CD8-positive, alpha-beta T cell (primary cell): ENCODE measurements at regions of chr6 and their contacts with region 1.

Region 1: DNA sequence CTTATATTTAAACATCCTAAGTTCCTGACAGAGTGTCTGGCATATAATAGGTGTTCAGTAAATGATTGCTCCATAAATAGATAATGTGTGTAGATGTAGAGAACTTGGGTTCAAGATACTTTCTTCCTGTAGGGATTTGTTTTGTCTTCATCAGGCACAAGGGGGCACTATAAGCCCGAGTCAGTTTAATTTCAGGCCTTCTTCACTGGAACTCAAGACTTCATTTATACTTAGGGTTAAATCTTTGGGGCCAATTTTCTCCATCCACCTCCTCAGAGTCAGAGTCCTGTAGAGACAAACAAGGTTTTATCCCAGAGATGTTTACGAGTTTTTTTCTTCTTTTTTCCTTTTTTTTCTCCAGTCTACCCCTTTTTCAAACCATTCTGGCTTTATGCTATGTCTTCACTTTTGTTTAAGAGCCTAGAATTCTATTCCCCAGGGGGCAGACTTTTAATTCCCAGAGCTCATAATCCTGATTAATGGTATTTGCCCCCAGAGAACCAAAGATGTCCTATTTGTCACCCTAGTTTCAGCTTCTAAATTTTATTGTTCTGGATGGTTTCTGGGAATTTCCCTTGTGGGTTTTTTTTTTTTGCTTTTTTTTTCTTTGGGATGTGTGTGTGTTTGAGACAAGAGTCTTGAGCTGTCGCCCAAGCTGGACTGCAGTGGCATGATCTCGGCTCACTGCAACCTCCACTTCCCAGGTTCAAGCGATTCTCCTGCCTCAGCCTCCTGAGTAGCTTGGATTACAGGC is 88.4 kb downstream of the HFE start:
- DNase-seq: peak in 7 of 9 experiments; percentile 33 to 87 (median 53)
- ATAC-seq: no peak
- H3K4me3 ChIP-seq: no peak overlapping the region
- H3K4me3 Mint-ChIP-seq: peak overlapping the region; percentile 3
- H3K27ac ChIP-seq: no peak overlapping the region
- H3K27ac Mint-ChIP-seq: peak overlapping the region; percentile 63
- H3K4me1 ChIP-seq: peaks cover 26% of the 10 kb centered on the region
- H3K4me1 Mint-ChIP-seq: peaks cover 39% of the 10 kb centered on the region
- H3K27me3 ChIP-seq: no peaks in the 10 kb centered on the region
- H3K27me3 Mint-ChIP-seq: no peaks in the 10 kb centered on the region
- CTCF ChIP-seq: peak; percentile 93

Region 2: GRCh38 chr6:26163427-26164119 is 12.0 kb before region 1 on chr6:
- CTCF ChIA-PET with region 1: interaction called, 15 read pairs
- POLR2A ChIA-PET with region 1: interaction called, 400 read pairs
- intact Hi-C with region 1: loop called (anchors 1 kb)
- DNase-seq: no peak
- ATAC-seq: no peak
- H3K4me3 ChIP-seq: no peak overlapping the region
- H3K4me3 Mint-ChIP-seq: peak overlapping the region; percentile 42
- H3K27ac ChIP-seq: no peak overlapping the region
- H3K27ac Mint-ChIP-seq: peak overlapping the region; percentile 70
- H3K4me1 ChIP-seq: peaks cover 40% of the 10 kb centered on the region
- H3K4me1 Mint-ChIP-seq: peaks cover 48% of the 10 kb centered on the region
- H3K27me3 ChIP-seq: no peaks in the 10 kb centered on the region
- H3K27me3 Mint-ChIP-seq: no peaks in the 10 kb centered on the region
- CTCF ChIP-seq: no peak

Region 3: DNA sequence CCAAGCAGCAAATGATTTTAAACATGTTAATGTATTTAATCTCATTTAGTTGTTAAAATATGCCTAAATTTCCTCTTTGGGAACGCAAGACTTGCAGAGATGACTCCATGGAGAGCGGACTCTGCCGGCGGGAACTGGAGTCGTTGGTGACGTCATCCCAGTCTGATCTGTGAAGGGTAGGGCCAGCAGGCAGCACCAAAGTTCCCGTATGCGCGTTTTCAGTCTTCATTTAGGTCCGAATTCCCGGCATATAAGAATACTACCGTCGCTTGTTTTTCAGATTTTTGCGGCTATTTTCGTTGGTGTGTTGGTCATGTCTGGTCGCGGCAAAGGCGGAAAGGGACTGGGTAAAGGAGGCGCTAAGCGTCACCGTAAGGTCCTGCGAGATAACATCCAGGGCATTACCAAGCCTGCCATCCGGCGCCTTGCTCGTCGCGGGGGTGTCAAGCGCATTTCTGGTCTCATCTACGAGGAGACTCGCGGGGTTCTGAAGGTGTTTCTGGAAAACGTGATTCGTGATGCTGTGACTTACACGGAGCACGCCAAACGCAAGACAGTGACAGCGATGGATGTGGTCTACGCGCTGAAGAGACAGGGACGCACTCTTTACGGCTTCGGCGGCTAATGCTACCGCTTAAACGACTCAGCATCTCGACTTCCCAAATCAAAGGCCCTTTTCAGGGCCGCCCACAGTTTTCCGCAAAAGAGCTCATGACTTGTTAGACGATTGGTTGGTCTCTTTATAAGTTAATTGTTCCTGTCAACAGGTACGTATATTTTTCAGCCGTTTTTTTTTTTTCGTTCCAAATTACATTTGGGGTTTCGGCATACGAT is 28.9 kb after region 1 on chr6:
- CTCF ChIA-PET with region 1: interaction called, 44 read pairs
- POLR2A ChIA-PET with region 1: interaction called, 250 read pairs
- intact Hi-C with region 1: no loop called
- DNase-seq: peak; percentile 75 to 98 (median 84)
- ATAC-seq: peak; percentile 74
- H3K4me3 ChIP-seq: peak overlapping the region; percentile 54 to 70
- H3K4me3 Mint-ChIP-seq: no peak overlapping the region
- H3K27ac ChIP-seq: peak overlapping the region; percentile 91
- H3K27ac Mint-ChIP-seq: no peak overlapping the region
- H3K4me1 ChIP-seq: peaks cover 31% of the 10 kb centered on the region
- H3K4me1 Mint-ChIP-seq: peaks cover 23% of the 10 kb centered on the region
- H3K27me3 ChIP-seq: no peaks in the 10 kb centered on the region
- H3K27me3 Mint-ChIP-seq: no peaks in the 10 kb centered on the region
- CTCF ChIP-seq: no peak

Region 4: DNA sequence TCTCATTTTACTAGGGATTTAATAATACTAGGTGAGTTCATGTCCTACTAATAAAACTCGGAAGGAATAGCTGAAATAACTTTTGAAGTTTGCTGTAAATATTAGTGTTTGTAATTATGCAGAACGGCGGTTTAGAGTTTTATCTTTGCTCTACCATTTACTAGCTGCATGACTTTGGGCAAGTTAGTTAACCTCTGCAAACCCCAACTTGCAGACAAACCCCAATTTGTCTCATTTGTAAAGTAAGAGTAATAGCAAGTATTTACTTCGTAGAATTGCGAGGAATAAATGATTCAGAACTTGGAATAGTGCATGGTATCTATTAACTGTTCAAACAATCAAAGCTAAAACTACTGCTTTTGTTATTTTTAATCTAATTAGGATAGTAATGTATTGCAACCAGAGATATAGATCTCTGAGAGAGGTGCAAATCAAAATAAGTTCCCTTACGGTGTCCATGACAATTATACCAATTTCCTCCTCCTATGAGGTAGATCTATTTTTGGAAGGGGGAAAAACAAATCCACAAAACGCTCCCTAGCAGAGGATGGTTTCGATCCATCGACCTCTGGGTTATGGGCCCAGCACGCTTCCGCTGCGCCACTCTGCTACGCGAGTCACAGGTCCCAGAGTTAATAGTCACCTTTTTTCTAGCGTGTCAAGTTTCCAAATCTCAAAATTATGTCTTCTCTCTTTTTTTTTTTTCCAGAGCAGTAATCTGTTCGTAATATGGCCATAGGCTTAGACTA is 154.3 kb after region 1 on chr6:
- CTCF ChIA-PET with region 1: interaction called, 3 read pairs
- POLR2A ChIA-PET with region 1: interaction called, 5 read pairs
- intact Hi-C with region 1: loop called in 1 of 2 experiments (anchors 5 kb)
- DNase-seq: peak in 7 of 9 experiments; percentile 35 to 81 (median 60)
- ATAC-seq: peak; percentile 27
- H3K4me3 ChIP-seq: no peak overlapping the region
- H3K4me3 Mint-ChIP-seq: peak overlapping the region; percentile 59
- H3K27ac ChIP-seq: no peak overlapping the region
- H3K27ac Mint-ChIP-seq: peak overlapping the region; percentile 85
- H3K4me1 ChIP-seq: peaks cover 18% of the 10 kb centered on the region
- H3K4me1 Mint-ChIP-seq: peaks cover 53% of the 10 kb centered on the region
- H3K27me3 ChIP-seq: peaks cover 8 to 11% of the 10 kb centered on the region in 2 experiments
- H3K27me3 Mint-ChIP-seq: peaks cover 27% of the 10 kb centered on the region
- CTCF ChIP-seq: no peak

Region 5: GRCh38 chr6:26537846-26538571 is 362.4 kb after region 1 on chr6 and contains the start of gene HMGN4:
- CTCF ChIA-PET with region 1: no interaction called
- POLR2A ChIA-PET with region 1: no interaction called
- intact Hi-C with region 1: loop called in 1 of 2 experiments (anchors 10 kb)
- DNase-seq: peak; percentile 65 to 96 (median 79)
- ATAC-seq: peak; percentile 69
- H3K4me3 ChIP-seq: peak within 1 kb of the TSS; percentile 66 to 99
- H3K4me3 Mint-ChIP-seq: peak within 1 kb of the TSS; percentile 89
- H3K27ac ChIP-seq: peak within 1 kb of the TSS; percentile 88 to 93
- H3K27ac Mint-ChIP-seq: peak within 1 kb of the TSS; percentile 92
- H3K4me1 ChIP-seq: peaks cover 32% of the 10 kb centered on the region
- H3K4me1 Mint-ChIP-seq: peaks cover 58% of the 10 kb centered on the region
- H3K27me3 ChIP-seq: no peaks in the 10 kb centered on the region
- H3K27me3 Mint-ChIP-seq: no peaks in the 10 kb centered on the region
- CTCF ChIP-seq: no peak
- total RNA-seq, gene HMGN4: 24.8 to 33.7 TPM